ENCODE measurements at regions of chr5 and their contacts with region 1.

Region 1: DNA sequence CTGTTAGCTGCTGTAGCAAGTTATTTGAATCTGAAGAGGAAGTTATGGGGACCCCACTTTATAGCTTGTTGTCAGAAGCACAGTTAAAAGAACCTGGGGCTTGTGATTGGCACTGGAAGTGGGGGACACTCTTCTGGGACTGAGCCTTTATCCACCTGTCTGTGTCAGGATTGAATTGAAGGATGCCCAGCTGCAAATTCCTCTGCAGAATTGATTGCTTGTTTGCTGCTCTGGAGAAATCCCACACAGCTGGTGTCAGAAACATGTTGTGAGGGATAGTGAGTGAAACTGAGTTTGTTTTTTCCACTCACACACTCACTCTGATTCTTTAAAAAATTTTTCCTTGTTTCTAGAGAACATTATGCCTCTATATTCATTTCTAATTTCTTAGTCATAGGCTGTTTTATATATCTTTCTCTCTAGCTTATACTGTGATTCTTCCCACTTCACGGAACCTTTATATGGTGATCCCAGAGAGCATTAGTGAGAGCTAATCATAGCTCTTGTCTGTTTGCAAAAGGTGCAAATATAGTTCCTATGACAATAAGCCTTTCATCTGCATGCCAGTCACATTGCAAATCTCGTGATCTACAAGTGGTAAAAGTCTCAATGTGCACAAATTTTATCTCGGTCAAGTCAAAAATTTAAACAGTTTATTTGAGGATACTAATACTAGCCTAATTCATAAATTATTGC is 188.5 kb upstream of the EDIL3 start:
- DNase-seq: no peak
- ATAC-seq: no peak
- H3K4me3 ChIP-seq: no peak overlapping the region
- H3K4me3 Mint-ChIP-seq: no peak overlapping the region
- H3K27ac ChIP-seq: no peak overlapping the region
- H3K27ac Mint-ChIP-seq: no peak overlapping the region
- H3K4me1 ChIP-seq: no peaks in the 10 kb centered on the region
- H3K4me1 Mint-ChIP-seq: no peaks in the 10 kb centered on the region
- H3K27me3 ChIP-seq: no peaks in the 10 kb centered on the region
- H3K27me3 Mint-ChIP-seq: no peaks in the 10 kb centered on the region
- CTCF ChIP-seq: no peak

Region 2: DNA sequence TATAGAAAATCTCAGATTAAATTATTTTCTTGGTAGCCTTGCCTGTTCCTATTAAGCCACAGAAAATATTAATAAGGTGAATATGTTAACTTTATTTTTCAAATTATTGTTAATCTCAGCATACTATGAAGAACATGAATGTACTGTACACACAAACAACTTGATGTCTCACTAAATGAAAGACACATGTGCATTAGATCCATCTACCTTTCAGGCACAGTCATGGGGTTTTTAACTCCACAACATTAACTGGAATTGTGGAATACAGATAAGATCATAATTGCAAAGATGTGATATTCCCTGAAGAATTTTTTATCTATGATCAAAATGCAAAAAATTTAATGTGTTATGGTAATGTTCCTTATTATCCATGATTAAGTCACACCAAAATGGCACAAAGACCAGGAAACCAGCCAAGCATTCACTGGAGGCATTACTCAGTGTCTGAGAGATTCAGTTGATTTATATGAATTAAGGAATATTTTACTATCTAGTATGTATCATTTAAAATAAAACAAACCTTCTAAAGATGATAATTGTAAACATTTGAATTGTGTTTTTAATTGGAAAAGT is 1251.6 kb before region 1 on chr5:
- CTCF ChIA-PET with region 1: no interaction called
- POLR2A ChIA-PET with region 1: no interaction called
- intact Hi-C with region 1: loop called in 1 of 2 experiments (anchors 10 kb)
- DNase-seq: no peak
- ATAC-seq: no peak
- H3K4me3 ChIP-seq: no peak overlapping the region
- H3K4me3 Mint-ChIP-seq: no peak overlapping the region
- H3K27ac ChIP-seq: no peak overlapping the region
- H3K27ac Mint-ChIP-seq: no peak overlapping the region
- H3K4me1 ChIP-seq: no peaks in the 10 kb centered on the region
- H3K4me1 Mint-ChIP-seq: no peaks in the 10 kb centered on the region
- H3K27me3 ChIP-seq: no peaks in the 10 kb centered on the region
- H3K27me3 Mint-ChIP-seq: no peaks in the 10 kb centered on the region
- CTCF ChIP-seq: no peak

Region 3: DNA sequence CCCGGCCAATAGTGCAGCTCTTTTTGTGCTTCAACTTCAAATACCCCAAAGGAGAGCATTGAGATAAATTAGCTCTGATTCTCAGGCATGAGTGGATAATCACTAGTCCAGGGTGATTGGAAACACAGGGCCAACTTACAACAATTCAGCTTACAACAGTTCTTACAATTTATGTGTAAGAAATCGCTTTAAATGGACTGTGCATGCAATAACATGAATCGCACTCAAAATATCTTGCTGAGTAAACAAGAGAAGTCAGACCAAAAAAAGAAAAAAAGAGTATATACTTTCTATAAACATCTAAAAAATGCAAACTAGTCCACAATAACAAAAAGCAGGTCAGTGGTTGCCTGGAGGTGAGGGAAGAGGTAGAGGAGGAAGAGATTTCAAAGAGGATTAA is 37.9 kb before region 1 on chr5:
- CTCF ChIA-PET with region 1: no interaction called
- POLR2A ChIA-PET with region 1: no interaction called
- intact Hi-C with region 1: no loop called
- DNase-seq: no peak
- ATAC-seq: no peak
- H3K4me3 ChIP-seq: no peak overlapping the region
- H3K4me3 Mint-ChIP-seq: no peak overlapping the region
- H3K27ac ChIP-seq: no peak overlapping the region
- H3K27ac Mint-ChIP-seq: no peak overlapping the region
- H3K4me1 ChIP-seq: no peaks in the 10 kb centered on the region
- H3K4me1 Mint-ChIP-seq: no peaks in the 10 kb centered on the region
- H3K27me3 ChIP-seq: no peaks in the 10 kb centered on the region
- H3K27me3 Mint-ChIP-seq: no peaks in the 10 kb centered on the region
- CTCF ChIP-seq: no peak

Region 4: DNA sequence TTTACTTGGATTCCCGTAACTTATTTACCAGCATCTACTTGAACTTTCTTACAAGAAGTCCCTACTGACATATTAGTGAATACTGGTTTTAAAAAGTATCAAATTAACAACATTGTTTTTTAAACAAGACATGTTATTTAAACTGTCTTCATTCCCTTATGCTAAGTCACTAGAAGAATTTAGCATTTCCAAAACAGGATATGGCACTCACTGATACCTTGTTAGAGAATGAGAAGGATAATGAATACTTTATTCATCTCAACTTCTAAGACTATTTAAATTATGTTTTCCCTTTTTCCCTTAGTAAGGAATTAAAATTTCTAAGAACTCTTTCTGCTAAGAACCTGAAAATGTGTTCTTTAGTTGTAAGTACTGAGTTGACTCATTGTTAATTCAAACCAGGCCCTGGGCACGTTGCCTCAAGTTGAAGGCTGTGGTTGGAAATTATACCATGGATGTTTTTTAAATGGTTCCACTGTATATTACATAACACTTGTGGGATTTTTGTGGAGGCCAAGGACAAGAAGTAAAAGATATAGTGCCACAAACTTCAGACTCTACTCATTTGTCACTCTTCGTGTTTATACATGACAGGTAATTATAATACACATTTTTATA is 30.5 kb after region 1 on chr5:
- CTCF ChIA-PET with region 1: no interaction called
- POLR2A ChIA-PET with region 1: no interaction called
- intact Hi-C with region 1: no loop called
- DNase-seq: no peak
- ATAC-seq: no peak
- H3K4me3 ChIP-seq: no peak overlapping the region
- H3K4me3 Mint-ChIP-seq: no peak overlapping the region
- H3K27ac ChIP-seq: no peak overlapping the region
- H3K27ac Mint-ChIP-seq: no peak overlapping the region
- H3K4me1 ChIP-seq: no peaks in the 10 kb centered on the region
- H3K4me1 Mint-ChIP-seq: no peaks in the 10 kb centered on the region
- H3K27me3 ChIP-seq: no peaks in the 10 kb centered on the region
- H3K27me3 Mint-ChIP-seq: no peaks in the 10 kb centered on the region
- CTCF ChIP-seq: no peak

Measured in CD8-positive, alpha-beta T cell (primary cell).